PC-9 (cell line): ENCODE measurements at regions of chr16 and their contacts with region 1.

Region 1: DNA sequence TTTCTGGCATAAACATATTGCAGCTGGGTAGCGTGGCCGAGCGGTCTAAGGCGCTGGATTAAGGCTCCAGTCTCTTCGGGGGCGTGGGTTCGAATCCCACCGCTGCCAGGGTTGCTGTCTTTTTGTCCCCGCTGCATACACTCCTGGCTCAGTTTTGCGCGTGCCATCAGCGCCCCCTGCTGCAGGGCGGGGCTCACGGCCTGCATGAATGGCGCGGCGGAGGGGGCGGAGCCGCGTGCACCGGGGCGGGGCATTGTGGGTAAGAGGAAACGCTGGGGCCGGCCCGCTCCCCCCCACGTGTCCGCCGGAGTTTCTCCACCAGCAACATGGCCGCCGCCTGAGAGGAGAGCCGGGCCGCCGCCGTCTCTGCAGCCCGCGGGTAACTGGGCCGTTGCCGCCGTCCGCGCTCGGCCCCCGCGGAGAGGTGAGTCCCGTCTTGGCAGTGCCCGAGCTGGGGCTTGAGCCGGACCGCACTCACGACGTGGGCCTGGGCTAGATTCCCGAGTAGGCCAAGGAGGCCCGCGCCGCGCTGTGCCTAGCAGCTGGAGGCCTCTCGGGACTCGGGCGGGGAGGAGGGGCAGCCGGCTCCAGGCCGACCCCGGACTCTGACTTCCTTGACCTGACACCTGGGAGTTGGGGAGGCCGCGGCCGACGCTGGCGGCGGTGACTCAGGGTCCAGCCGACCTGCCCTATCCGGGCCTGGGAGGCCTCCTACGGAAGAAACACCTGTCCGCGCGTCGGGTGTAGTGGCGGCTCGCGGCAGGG is at the start of gene POLR3E:
- DNase-seq: peak; percentile 89 to 100
- H3K4me3 ChIP-seq: peak within 1 kb of the TSS; percentile 78
- H3K27ac ChIP-seq: peak within 1 kb of the TSS; percentile 84
- H3K4me1 ChIP-seq: no peaks in the 10 kb centered on the region
- H3K27me3 ChIP-seq: no peaks in the 10 kb centered on the region
- CTCF ChIP-seq: peak; percentile 86
- total RNA-seq, gene POLR3E: 65.2 and 70.9 TPM in 2 replicates

Region 2: GRCh38 chr16:21952793-21953540 is 344.3 kb before region 1 on chr16 and contains the start of gene UQCRC2:
- CTCF ChIA-PET with region 1: no interaction called
- POLR2A ChIA-PET with region 1: interaction called, 3 read pairs
- intact Hi-C with region 1: loop called (anchors 2 kb)
- DNase-seq: peak; percentile 91 to 92
- H3K4me3 ChIP-seq: peak within 1 kb of the TSS; percentile 90
- H3K27ac ChIP-seq: peak within 1 kb of the TSS; percentile 94
- H3K4me1 ChIP-seq: peaks cover 14% of the 10 kb centered on the region
- H3K27me3 ChIP-seq: no peaks in the 10 kb centered on the region
- CTCF ChIP-seq: no peak
- total RNA-seq, gene UQCRC2: 195 and 299 TPM in 2 replicates

Region 3: GRCh38 chr16:22098405-22099255 is 198.7 kb before region 1 on chr16:
- CTCF ChIA-PET with region 1: no interaction called
- POLR2A ChIA-PET with region 1: no interaction called
- intact Hi-C with region 1: loop called (anchors 5 kb)
- DNase-seq: peak; percentile 27 to 55
- H3K4me3 ChIP-seq: peak overlapping the region; percentile 34; the same call in 1 of the 2 replicates
- H3K27ac ChIP-seq: no peak overlapping the region
- H3K4me1 ChIP-seq: no peaks in the 10 kb centered on the region
- H3K27me3 ChIP-seq: no peaks in the 10 kb centered on the region
- CTCF ChIP-seq: peak; percentile 66

Region 4: DNA sequence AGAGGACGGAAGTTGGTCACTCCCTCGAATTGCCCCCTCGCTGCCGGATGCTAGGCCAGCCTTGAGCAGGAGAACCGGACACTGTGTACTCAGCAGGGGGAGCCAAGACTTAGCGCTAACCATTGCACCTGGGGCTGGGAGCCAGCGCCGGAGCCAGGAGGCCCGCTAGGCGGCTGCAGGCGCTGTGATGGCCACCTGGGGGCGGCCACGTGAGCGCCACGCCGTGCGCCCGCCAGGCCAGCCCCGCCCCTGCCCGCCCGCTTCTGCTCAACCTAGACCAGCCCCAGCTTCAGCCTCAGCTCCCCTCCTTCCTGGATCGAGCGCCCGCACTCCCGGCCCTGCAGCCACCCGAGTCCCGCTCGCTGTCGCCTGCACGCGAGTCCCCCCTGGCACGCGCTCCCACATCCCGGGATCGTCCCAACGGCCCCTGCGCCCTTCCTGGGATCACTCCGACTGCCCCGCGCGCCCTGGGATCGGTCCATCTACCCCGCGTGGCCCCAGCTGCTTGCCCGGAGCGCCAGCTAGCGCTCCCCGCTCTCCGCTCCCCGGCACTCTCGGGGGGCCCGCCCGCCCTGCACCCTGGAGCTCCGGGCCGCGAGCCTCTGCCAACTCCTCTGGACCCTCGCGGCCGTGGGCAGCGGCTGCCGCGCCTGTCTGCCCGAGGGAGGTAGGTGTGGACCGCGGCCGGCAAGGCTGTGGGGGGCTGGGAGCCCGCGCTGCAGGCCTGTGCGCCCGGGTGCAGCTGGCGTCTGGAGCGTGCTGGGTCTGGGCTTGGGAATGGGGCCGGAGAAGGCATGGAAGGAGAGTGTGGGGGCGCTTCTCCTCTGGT is 91.1 kb before region 1 on chr16 and contains the start of gene EEF2K:
- CTCF ChIA-PET with region 1: interaction called, 4 read pairs
- POLR2A ChIA-PET with region 1: no interaction called
- intact Hi-C with region 1: loop called (anchors 1 kb)
- DNase-seq: peak; percentile 88 to 97
- H3K4me3 ChIP-seq: peak within 1 kb of the TSS; percentile 74
- H3K27ac ChIP-seq: peak within 1 kb of the TSS; percentile 73
- H3K4me1 ChIP-seq: peaks cover 25% of the 10 kb centered on the region
- H3K27me3 ChIP-seq: no peaks in the 10 kb centered on the region
- CTCF ChIP-seq: peak; percentile 68
- total RNA-seq, gene EEF2K: 29.8 and 34.7 TPM in 2 replicates